CD4-positive, alpha-beta T cell (primary cell): ENCODE measurements at regions of chr10 and their contacts with region 1.

Region 1: GRCh38 chr10:72692057-72692910 is at the start of gene MCU:
- DNase-seq: peak; percentile 86 to 96 (median 92)
- ATAC-seq: peak; percentile 96
- H3K4me3 ChIP-seq: peak within 1 kb of the TSS; percentile 79
- H3K4me3 Mint-ChIP-seq: peak within 1 kb of the TSS; percentile 91
- H3K27ac ChIP-seq: peak within 1 kb of the TSS in 1 of 2 donors; percentile 24
- H3K27ac Mint-ChIP-seq: peak within 1 kb of the TSS; percentile 41
- H3K4me1 ChIP-seq: peaks cover 10% of the 10 kb centered on the region
- H3K4me1 Mint-ChIP-seq: peaks cover 43% of the 10 kb centered on the region
- H3K27me3 ChIP-seq: no peaks in the 10 kb centered on the region
- H3K27me3 Mint-ChIP-seq: no peaks in the 10 kb centered on the region
- CTCF ChIP-seq: no peak
- total RNA-seq, gene MCU: 10.3 to 12.0 TPM

Region 2: DNA sequence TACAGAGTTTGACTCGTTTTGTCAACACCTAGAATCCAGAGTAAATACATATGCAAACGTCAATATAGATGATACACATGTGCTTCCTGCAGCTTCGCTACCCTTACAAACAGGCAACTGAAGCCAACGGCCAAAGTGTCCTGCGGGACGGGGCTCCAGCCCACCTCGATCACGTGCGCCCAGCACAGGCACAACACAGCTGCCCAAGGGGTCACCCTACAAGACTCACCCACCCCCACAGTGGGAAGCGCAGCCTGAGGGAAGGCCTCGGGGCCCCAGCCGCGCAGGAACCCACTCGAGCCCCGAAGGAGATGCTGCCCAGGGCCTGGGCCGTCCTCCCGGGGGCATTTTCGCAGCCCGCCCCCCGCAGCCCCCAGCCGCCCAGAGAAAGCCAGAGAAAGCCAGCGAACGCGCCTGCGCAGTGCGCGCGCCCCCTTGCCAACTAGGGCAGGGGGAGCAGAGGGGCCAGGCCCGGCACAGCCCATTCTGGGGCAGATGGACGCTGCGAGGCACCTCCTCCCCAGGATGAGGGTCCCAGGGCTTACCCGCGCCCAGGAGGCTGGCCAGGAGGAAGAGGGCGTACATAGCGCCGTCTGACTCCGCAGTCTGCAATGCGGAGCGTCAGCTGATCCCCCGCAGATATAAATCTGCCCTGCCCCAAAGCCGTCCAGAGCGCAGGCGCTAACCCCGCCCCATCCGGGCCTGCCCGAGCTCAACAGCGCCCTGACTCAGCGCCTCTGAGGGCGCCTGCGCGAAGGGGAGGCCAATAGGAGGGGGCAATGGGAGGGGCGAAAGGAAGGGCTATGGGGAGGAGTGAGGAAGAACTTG is 841.4 kb before region 1 on chr10 and contains the start of gene PSAP:
- CTCF ChIA-PET with region 1: no interaction called
- POLR2A ChIA-PET with region 1: no interaction called
- intact Hi-C with region 1: loop called in 1 of 2 experiments (anchors 10 kb)
- DNase-seq: peak; percentile 97 to 99 (median 98)
- ATAC-seq: peak; percentile 96
- H3K4me3 ChIP-seq: peak within 1 kb of the TSS; percentile 99
- H3K4me3 Mint-ChIP-seq: peak within 1 kb of the TSS; percentile 96
- H3K27ac ChIP-seq: peak within 1 kb of the TSS; percentile 47 to 85
- H3K27ac Mint-ChIP-seq: peak within 1 kb of the TSS; percentile 85
- H3K4me1 ChIP-seq: peaks cover 33% of the 10 kb centered on the region
- H3K4me1 Mint-ChIP-seq: peaks cover 51% of the 10 kb centered on the region
- H3K27me3 ChIP-seq: no peaks in the 10 kb centered on the region
- H3K27me3 Mint-ChIP-seq: no peaks in the 10 kb centered on the region
- CTCF ChIP-seq: no peak
- total RNA-seq, gene PSAP: 191 to 206 TPM

Region 3: DNA sequence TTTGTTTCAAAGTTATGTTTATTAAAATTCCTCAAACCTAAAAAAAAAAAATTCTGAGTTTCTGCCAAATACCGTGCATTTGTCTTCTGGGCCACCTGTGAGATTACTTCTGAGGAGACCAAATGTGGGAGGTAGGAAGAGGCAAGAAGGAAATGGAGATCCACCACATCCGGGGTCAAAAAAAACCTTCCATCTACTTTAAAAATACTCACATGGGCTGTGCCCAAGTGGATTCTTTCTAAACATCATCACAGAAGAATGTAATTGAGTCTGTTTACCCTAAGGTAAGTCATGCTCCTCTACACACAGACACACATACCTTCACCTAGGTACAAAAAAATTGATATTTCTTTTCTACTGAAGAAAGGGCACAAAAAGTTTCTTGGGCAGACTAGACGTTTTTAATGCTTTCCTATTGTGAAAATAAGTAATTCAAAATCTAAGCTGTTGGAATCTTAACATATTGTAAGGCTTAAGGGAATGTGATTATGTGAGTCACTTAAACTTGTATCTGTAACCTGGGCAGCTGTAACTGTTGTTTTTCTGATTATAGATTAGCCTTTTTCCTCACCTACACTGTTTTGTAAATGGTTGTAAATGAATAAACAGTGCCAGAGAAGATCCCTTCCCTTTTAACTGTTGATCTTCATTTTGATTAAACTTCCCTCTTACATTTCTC is 584.8 kb before region 1 on chr10:
- CTCF ChIA-PET with region 1: no interaction called
- POLR2A ChIA-PET with region 1: no interaction called
- intact Hi-C with region 1: loop called in 1 of 2 experiments (anchors 10 kb)
- DNase-seq: peak in 4 of 14 experiments; percentile 34 to 82 (median 78)
- ATAC-seq: peak; percentile 77
- H3K4me3 ChIP-seq: peak overlapping the region; percentile 12
- H3K4me3 Mint-ChIP-seq: peak overlapping the region; percentile 87
- H3K27ac ChIP-seq: peak overlapping the region; percentile 69 to 74
- H3K27ac Mint-ChIP-seq: peak overlapping the region; percentile 94
- H3K4me1 ChIP-seq: peaks cover 70% of the 10 kb centered on the region
- H3K4me1 Mint-ChIP-seq: peaks cover 92% of the 10 kb centered on the region
- H3K27me3 ChIP-seq: no peaks in the 10 kb centered on the region
- H3K27me3 Mint-ChIP-seq: no peaks in the 10 kb centered on the region
- CTCF ChIP-seq: no peak

Region 4: DNA sequence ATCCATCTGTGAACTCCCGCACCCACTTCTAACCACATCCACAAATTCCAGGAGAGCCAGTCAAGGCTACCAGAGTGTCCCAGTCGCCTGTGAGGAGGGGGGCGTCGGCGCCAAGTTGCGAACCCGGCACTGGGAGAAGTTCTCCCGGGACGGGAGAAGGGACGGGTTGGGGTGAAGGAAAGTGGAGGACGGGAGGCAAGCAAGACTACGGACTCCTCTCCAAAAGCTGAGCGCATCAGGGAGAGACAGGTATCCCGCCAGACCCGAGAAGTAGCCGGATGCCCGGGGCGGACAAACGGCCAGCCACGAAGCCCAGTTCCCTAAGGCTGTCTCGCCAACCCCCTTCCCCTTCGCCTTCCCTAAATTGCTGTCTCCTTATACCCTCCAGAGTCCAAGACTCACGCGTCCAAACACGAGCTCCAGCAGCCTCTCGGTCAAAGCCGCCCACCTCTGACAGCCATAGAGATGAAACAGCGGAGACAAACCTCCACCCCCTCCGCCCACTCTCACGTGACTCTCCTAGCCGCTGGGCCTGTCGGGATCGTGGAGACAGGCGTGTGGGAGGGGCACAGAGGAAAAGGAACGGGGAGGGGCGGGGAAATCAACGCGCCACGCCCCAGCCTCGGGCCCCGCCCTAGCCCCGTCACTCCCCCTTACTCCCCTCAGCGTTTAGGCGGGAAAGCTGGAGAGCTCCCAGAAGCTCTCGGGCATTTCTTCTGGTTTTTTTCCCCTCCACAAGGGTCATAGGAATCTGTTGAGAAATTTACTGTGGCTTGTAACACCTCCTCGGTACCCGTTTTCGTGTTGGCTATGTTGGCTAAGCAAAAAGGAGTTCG is 66.5 kb before region 1 on chr10 and contains the start of gene MICU1:
- CTCF ChIA-PET with region 1: interaction called, 7 read pairs
- POLR2A ChIA-PET with region 1: interaction called, 13 read pairs
- intact Hi-C with region 1: loop called (anchors 2 kb)
- DNase-seq: peak; percentile 85 to 97 (median 92)
- ATAC-seq: peak; percentile 99
- H3K4me3 ChIP-seq: peak within 1 kb of the TSS; percentile 92
- H3K4me3 Mint-ChIP-seq: peak within 1 kb of the TSS; percentile 99
- H3K27ac ChIP-seq: peak within 1 kb of the TSS; percentile 15 to 42
- H3K27ac Mint-ChIP-seq: peak within 1 kb of the TSS; percentile 83
- H3K4me1 ChIP-seq: peaks cover 16% of the 10 kb centered on the region
- H3K4me1 Mint-ChIP-seq: peaks cover 26% of the 10 kb centered on the region
- H3K27me3 ChIP-seq: no peaks in the 10 kb centered on the region
- H3K27me3 Mint-ChIP-seq: no peaks in the 10 kb centered on the region
- CTCF ChIP-seq: no peak
- total RNA-seq, gene MICU1: 9.4 to 12.1 TPM

Region 5: GRCh38 chr10:72834183-72834825 is 142.0 kb after region 1 on chr10:
- CTCF ChIA-PET with region 1: interaction called, 5 read pairs
- POLR2A ChIA-PET with region 1: interaction called, 3 read pairs
- intact Hi-C with region 1: loop called (anchors 2 kb)
- DNase-seq: peak in 13 of 14 experiments; percentile 2 to 77 (median 23)
- ATAC-seq: peak; percentile 84
- H3K4me3 ChIP-seq: no peak overlapping the region
- H3K4me3 Mint-ChIP-seq: no peak overlapping the region
- H3K27ac ChIP-seq: no peak overlapping the region
- H3K27ac Mint-ChIP-seq: no peak overlapping the region
- H3K4me1 ChIP-seq: no peaks in the 10 kb centered on the region
- H3K4me1 Mint-ChIP-seq: peaks cover 4% of the 10 kb centered on the region
- H3K27me3 ChIP-seq: no peaks in the 10 kb centered on the region
- H3K27me3 Mint-ChIP-seq: no peaks in the 10 kb centered on the region
- CTCF ChIP-seq: peak; percentile 69

Region 6: GRCh38 chr10:72875250-72876055 is 183.2 kb after region 1 on chr10:
- CTCF ChIA-PET with region 1: no interaction called
- POLR2A ChIA-PET with region 1: no interaction called
- intact Hi-C with region 1: loop called in 1 of 2 experiments (anchors 5 kb)
- DNase-seq: peak in 4 of 14 experiments; percentile 5 to 47 (median 38)
- ATAC-seq: no peak
- H3K4me3 ChIP-seq: no peak overlapping the region
- H3K4me3 Mint-ChIP-seq: no peak overlapping the region
- H3K27ac ChIP-seq: no peak overlapping the region
- H3K27ac Mint-ChIP-seq: no peak overlapping the region
- H3K4me1 ChIP-seq: no peaks in the 10 kb centered on the region
- H3K4me1 Mint-ChIP-seq: no peaks in the 10 kb centered on the region
- H3K27me3 ChIP-seq: no peaks in the 10 kb centered on the region
- H3K27me3 Mint-ChIP-seq: no peaks in the 10 kb centered on the region
- CTCF ChIP-seq: no peak